Right ventricle myocardium inferior (tissue), 1 donor: ENCODE measurements at regions of chr3 and their contacts with region 1.

Region 1: DNA sequence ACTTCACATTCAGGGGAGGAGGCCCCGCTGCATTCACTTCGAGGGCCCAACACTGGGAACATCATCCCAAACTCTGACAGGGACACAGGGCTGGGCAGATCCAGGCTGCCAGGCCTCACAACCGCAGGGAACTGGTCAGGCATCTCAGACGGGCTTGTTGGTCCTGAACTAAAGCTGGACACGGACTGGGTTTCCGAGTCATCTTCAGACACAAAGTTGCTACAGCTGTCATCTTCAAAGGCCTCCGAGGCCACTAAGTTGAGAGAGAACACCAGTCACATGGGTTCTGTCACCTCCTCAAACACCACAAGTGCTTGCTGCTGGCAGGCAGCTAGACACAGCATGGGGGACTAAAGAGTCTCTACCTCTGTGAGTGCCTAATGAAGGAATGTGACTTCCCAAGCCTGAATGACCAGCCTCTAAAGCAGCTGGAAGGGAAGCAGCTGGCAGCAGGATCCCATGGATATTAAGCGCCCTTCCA is 50.9 kb downstream of the CAPN7 start:
- DNase-seq: no peak
- ATAC-seq: peak; percentile 75

Region 2: DNA sequence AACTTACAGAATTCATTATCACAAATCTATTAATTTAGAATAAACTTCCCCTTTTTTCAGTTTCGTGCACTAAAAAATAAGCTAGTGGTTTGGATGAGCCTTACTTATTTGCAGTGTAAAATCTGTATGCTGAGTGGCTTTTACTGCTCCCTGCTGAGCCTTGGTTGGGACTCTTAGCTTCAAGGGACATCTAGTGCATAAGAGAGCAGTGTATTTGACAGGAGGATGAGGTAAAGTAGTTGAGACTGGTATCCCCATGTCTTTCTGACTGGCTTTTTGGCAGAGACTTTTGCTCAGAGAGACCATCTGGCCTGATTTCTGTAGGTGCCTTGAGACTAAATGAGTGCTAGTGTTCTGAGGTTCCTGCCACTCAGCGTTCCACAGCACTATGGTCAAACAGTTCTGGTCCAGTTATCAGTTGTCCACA is 39.0 kb before region 1 on chr3:
- intact Hi-C with region 1: loop called (anchors 1 kb)
- DNase-seq: no peak
- ATAC-seq: peak; percentile 73

Region 3: GRCh38 chr3:15616053-15616452 is 359.2 kb after region 1 on chr3:
- intact Hi-C with region 1: no loop called
- DNase-seq: no peak
- ATAC-seq: no peak